HCT116 (cell line): ENCODE measurements at regions of chr17 and their contacts with region 1.

Region 1: DNA sequence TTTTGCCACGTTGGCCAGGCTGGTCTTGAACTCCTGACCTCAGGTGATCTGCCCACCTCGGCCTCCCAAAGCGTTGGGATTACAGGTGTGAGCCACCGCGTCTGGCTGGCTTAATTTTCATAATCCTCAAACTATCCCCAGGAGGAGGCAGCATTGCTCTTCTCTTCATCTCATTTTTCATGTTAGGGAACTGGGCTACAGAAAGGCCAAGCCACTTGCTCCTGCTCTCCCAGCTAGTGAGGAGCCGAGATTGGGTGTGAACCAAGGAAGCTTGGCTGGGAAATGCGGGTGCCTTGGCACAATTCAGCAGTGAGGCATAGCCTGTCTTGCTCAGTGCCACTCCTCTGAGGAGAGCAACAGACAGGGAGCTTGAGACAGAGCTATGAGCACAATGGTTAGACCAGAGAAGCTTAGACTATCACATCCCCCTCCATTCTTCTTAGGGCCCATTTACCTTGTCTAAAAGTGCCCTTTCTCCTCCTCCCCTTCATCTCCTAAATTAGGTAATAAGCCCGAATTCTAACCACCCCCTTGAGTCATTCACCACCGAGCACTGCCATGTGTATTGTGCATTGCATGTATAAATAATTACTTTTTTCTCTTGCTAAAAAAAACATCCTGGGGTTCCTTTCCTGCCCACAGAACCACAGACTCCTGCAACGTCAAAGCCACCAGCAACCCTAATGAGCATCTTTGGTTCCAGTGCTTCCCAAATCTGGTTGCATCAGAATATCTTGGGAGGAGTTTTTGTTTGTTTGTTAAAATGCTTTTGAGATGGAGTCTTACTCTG is 20.0 kb upstream of the KIF19 start:
- DNase-seq: no peak
- ATAC-seq: peak; percentile 23; the same call in 1 of the 2 replicates
- H3K4me3 ChIP-seq: no peak overlapping the region
- H3K27ac ChIP-seq: no peak overlapping the region
- H3K4me1 ChIP-seq: peaks cover 0 to 3% of the 10 kb centered on the region in 2 experiments; a peak in 1 of 4 replicates
- H3K27me3 ChIP-seq: no peaks in the 10 kb centered on the region
- CTCF ChIP-seq: peak; percentile 11 to 45 (median 20); a peak in 3 of 6 replicates
- POLR2A ChIP-seq: no peak
- RAD21 ChIP-seq: no peak; the same call in none of the 2 replicates

Region 2: GRCh38 chr17:74203439-74204240 is 102.4 kb before region 1 on chr17 and contains the start of gene RPL38:
- CTCF ChIA-PET with region 1: no interaction called
- POLR2A ChIA-PET with region 1: no interaction called
- RAD21 ChIA-PET with region 1: no interaction called
- intact Hi-C with region 1: no loop called
- DNase-seq: peak; percentile 99
- ATAC-seq: peak; percentile 74
- H3K4me3 ChIP-seq: peak within 1 kb of the TSS; percentile 98 to 99
- H3K27ac ChIP-seq: peak within 1 kb of the TSS; percentile 65
- H3K4me1 ChIP-seq: peaks cover 11 to 48% of the 10 kb centered on the region in 2 experiments
- H3K27me3 ChIP-seq: no peaks in the 10 kb centered on the region
- CTCF ChIP-seq: peak; percentile 83 to 98 (median 98)
- POLR2A ChIP-seq: peak; percentile 98
- RAD21 ChIP-seq: no peak
- total RNA-seq, gene RPL38: 1,628 TPM

Region 3: DNA sequence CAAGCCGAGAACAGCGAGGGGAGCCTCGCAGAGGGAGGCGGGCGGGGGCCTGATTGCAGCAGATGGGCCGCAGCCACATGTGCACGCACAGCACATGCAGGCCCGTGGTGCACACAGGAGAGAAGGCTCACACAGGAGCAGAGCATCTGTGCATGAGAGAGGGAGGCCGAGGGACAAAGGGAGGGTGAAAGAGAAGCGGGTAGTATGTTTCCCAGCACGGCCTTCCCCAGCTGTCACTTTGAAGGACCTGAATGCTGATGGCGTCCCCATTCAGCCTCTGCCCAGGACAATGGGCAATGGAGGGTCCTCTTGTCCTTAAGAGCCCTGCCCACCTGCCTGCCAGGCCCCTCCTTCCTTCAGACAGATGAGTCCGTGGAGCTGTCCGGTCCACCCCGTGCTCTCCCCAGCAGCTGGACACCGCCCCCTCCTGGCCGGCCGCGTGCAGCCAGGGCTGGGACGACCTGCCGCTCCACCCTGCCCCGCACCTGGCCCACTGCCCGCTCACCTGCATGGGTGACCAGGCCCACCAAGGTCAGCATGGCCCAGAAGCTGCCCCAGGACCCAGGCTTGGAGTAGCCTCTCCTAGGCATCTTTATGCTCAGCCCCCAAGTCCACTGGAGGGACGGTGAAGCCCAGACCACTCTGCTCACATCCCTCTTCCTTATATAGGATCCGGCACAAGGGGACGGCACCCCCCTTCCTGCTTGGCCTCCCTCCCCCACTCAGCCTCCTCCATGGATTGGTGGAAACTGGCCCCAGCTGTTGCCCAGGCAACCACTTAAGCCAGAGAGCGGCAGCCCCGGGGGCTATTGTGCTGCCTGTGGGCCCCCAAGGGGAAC is 55.4 kb after region 1 on chr17 and contains the start of gene BTBD17:
- CTCF ChIA-PET with region 1: interaction called, 27 read pairs
- POLR2A ChIA-PET with region 1: interaction called, 3 read pairs
- RAD21 ChIA-PET with region 1: interaction called in 1 of 2 experiments, 7 read pairs
- intact Hi-C with region 1: loop called (anchors 1 kb)
- DNase-seq: no peak
- ATAC-seq: peak; percentile 96
- H3K4me3 ChIP-seq: no peak within 1 kb of the TSS
- H3K27ac ChIP-seq: no peak within 1 kb of the TSS; the same call in 1 of the 2 replicates
- H3K4me1 ChIP-seq: peaks cover 0 to 8% of the 10 kb centered on the region in 2 experiments; a peak in 1 of 4 replicates
- H3K27me3 ChIP-seq: no peaks in the 10 kb centered on the region
- CTCF ChIP-seq: peak; percentile 86 to 98 (median 98)
- POLR2A ChIP-seq: no peak
- RAD21 ChIP-seq: peak; percentile 80
- total RNA-seq, gene BTBD17: not detected

Region 4: GRCh38 chr17:74478420-74479100 is 172.5 kb after region 1 on chr17:
- CTCF ChIA-PET with region 1: no interaction called
- POLR2A ChIA-PET with region 1: no interaction called
- RAD21 ChIA-PET with region 1: no interaction called
- intact Hi-C with region 1: no loop called
- DNase-seq: no peak
- ATAC-seq: no peak
- H3K4me3 ChIP-seq: no peak overlapping the region
- H3K27ac ChIP-seq: no peak overlapping the region
- H3K4me1 ChIP-seq: no peaks in the 10 kb centered on the region
- H3K27me3 ChIP-seq: peaks cover 22% of the 10 kb centered on the region
- CTCF ChIP-seq: no peak
- POLR2A ChIP-seq: no peak
- RAD21 ChIP-seq: no peak